Panc1 (cell line): ENCODE measurements at regions of chr9 and their contacts with region 1.

Region 1: DNA sequence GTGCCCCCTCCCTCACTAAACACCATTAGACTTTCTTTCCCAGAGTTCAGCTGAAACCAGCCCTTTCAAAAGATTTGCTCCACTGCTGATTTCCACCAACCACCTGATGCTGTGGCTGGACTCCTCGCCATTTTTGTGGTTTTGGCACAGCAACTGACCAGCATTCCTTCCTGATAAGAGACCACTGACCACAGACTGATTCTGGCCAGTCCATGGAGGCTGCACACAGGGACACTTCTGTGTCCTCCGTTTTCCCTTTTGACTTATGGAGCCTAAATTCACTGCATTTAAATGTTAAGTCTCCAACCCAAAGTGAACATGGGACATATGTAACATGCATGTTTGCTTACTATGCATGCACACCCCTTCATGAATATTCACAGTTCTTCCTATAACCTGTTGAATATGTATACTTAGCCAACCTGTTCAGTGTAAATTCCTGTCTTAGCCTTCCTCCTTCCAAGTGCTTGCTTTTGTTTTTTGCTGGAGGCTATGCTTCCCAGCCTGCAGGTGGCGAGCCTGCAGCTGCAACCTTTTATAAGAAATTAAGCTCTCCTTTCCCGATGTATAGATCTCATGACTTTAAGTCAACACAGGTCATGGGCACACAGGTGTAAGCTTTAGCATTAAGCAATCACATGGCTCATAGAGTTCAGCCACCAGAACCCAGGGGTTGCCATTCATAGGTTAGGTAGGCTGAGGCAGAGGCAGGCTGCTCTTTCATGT is 78.7 kb downstream of the ACTL7B start:
- DNase-seq: no peak
- ATAC-seq: no peak
- H3K4me3 ChIP-seq: no peak overlapping the region
- H3K27ac ChIP-seq: no peak overlapping the region
- H3K4me1 ChIP-seq: no peaks in the 10 kb centered on the region
- H3K27me3 ChIP-seq: no peaks in the 10 kb centered on the region; the same call in 1 of the 2 replicates
- CTCF ChIP-seq: 0 out of 2 replicates have a peak, but pooled peaks have one; percentile 13

Region 2: DNA sequence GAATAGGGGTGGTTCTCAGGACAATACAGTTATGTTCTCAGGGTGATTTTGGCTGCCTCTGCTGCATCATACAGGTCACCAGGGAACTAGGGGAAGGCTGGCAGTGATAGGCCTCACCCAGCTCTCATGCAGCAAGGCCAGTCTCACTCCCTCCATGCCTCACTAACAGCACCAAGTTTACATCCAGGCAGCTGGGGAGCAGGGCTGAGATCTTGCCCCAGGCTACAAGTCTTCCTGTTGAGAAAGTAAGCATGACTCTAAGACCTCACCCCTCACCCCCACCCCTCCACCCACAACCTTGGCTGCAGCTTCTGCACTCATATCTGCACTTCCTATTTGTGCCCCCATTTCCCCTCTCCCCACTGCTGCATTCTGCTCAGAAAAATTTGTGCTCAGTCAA is 402.5 kb before region 1 on chr9:
- CTCF ChIA-PET with region 1: no interaction called
- POLR2A ChIA-PET with region 1: interaction called, 13 read pairs
- in situ Hi-C with region 1: no loop called
- intact Hi-C with region 1: no loop called
- DNase-seq: no peak
- ATAC-seq: no peak
- H3K4me3 ChIP-seq: no peak overlapping the region
- H3K27ac ChIP-seq: no peak overlapping the region
- H3K4me1 ChIP-seq: no peaks in the 10 kb centered on the region
- H3K27me3 ChIP-seq: no peaks in the 10 kb centered on the region
- CTCF ChIP-seq: no peak

Region 3: GRCh38 chr9:108746864-108747263 is 30.2 kb before region 1 on chr9:
- CTCF ChIA-PET with region 1: interaction called, 18 read pairs
- POLR2A ChIA-PET with region 1: no interaction called
- in situ Hi-C with region 1: no loop called
- intact Hi-C with region 1: no loop called
- DNase-seq: no peak
- ATAC-seq: no peak
- H3K4me3 ChIP-seq: no peak overlapping the region
- H3K27ac ChIP-seq: no peak overlapping the region
- H3K4me1 ChIP-seq: no peaks in the 10 kb centered on the region
- H3K27me3 ChIP-seq: no peaks in the 10 kb centered on the region
- CTCF ChIP-seq: no peak

Region 4: GRCh38 chr9:108786901-108787689 is 10.0 kb after region 1 on chr9:
- CTCF ChIA-PET with region 1: no interaction called
- POLR2A ChIA-PET with region 1: no interaction called
- in situ Hi-C with region 1: no loop called
- intact Hi-C with region 1: no loop called
- DNase-seq: no peak
- ATAC-seq: no peak
- H3K4me3 ChIP-seq: no peak overlapping the region
- H3K27ac ChIP-seq: no peak overlapping the region
- H3K4me1 ChIP-seq: no peaks in the 10 kb centered on the region
- H3K27me3 ChIP-seq: no peaks in the 10 kb centered on the region; the same call in 1 of the 2 replicates
- CTCF ChIP-seq: no peak

Region 5: DNA sequence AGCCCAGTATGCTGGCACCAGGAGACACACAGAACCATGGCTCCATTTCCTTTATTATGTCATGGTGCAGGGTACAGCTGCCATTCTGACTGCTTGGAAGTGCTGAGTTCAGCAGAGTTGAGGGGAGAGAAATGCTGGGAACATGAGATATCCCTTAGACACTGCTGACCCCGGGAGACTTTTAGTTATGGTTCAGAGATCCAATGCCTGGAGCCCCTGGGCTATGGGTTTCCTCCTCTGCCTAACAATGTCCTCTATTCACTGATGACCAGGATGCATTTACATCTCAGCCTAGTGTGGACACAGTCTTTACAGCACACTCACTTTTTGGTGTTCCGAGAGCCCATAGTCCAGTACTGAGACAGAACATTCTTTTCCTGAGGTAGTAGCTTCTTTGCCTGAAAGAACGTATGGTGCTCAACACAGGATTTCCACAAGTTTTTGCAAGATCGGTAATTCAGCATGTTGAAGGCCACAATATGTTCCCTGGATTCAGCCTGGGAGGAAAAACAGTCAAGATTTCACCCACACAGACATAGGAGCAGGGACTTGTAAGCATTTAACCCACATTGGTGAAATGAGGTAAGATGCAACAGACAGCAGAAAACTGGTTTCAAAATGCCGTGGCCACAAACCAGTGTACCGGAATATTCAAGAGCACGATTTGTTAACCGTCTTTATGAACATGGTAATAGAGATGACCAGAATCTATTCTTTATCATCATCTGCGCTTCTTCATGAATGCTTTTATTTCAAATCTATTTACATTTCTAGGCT is 649.7 kb after region 1 on chr9:
- CTCF ChIA-PET with region 1: no interaction called
- POLR2A ChIA-PET with region 1: no interaction called
- in situ Hi-C with region 1: no loop called
- intact Hi-C with region 1: no loop called
- DNase-seq: no peak
- ATAC-seq: no peak
- H3K4me3 ChIP-seq: no peak overlapping the region
- H3K27ac ChIP-seq: no peak overlapping the region
- H3K4me1 ChIP-seq: no peaks in the 10 kb centered on the region
- H3K27me3 ChIP-seq: no peaks in the 10 kb centered on the region
- CTCF ChIP-seq: no peak